Breast epithelium (tissue), 4 donors: ENCODE measurements at regions of chr9 and their contacts with region 1.

Region 1: GRCh38 chr9:16217943-16218701 is 652.3 kb downstream of the BNC2 start:
- DNase-seq: no peak
- H3K4me3 ChIP-seq: no peak overlapping the region
- H3K27ac ChIP-seq: no peak overlapping the region
- H3K4me1 ChIP-seq: no peaks in the 10 kb centered on the region
- H3K27me3 ChIP-seq: no peaks in the 10 kb centered on the region
- CTCF ChIP-seq: no peak
- POLR2A ChIP-seq: no peak

Region 2: GRCh38 chr9:15079989-15080388 is 1138.1 kb before region 1 on chr9:
- intact Hi-C with region 1: loop called (anchors 5 kb)
- DNase-seq: no peak
- H3K4me3 ChIP-seq: no peak overlapping the region
- H3K27ac ChIP-seq: no peak overlapping the region
- H3K4me1 ChIP-seq: no peaks in the 10 kb centered on the region
- H3K27me3 ChIP-seq: no peaks in the 10 kb centered on the region
- CTCF ChIP-seq: no peak
- POLR2A ChIP-seq: no peak